ENCODE measurements at regions of chr16 and their contacts with region 1.

Region 1: GRCh38 chr16:21656795-21657768 is 4.7 kb upstream of the IGSF6 start:
- DNase-seq: peak; percentile 66
- ATAC-seq: no peak
- H3K4me3 Mint-ChIP-seq: no peak overlapping the region
- H3K27ac Mint-ChIP-seq: no peak overlapping the region
- H3K4me1 Mint-ChIP-seq: peaks cover 44% of the 10 kb centered on the region
- H3K27me3 Mint-ChIP-seq: no peaks in the 10 kb centered on the region

Region 2: GRCh38 chr16:21590287-21590686 is 66.8 kb before region 1 on chr16:
- CTCF ChIA-PET with region 1: interaction called, 13 read pairs
- POLR2A ChIA-PET with region 1: no interaction called
- DNase-seq: no peak
- ATAC-seq: no peak
- H3K4me3 Mint-ChIP-seq: no peak overlapping the region
- H3K27ac Mint-ChIP-seq: no peak overlapping the region
- H3K4me1 Mint-ChIP-seq: peaks cover 1% of the 10 kb centered on the region
- H3K27me3 Mint-ChIP-seq: peaks cover 3% of the 10 kb centered on the region

Region 3: DNA sequence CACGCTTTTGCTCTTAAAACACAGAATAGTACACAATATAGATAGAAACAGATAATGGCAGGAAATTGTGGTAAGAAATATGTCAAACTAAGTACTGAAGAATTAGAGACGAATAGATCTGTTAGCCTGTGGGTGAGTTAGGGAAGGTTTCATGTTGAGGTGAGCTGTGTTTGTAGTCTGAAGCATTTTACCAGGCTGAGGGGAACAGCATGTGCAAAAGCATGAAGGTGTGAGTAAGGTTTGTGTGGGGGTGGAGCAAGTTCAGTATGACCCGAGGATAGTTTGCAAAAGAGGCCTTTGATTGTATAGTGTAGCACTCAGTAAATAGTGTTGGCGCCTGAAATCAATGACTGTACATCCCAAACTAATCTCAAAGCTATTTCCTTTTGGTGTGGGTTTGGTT is 18.5 kb before region 1 on chr16:
- CTCF ChIA-PET with region 1: interaction called, 53 read pairs
- POLR2A ChIA-PET with region 1: no interaction called
- DNase-seq: peak; percentile 28
- ATAC-seq: peak; percentile 73
- H3K4me3 Mint-ChIP-seq: no peak overlapping the region
- H3K27ac Mint-ChIP-seq: peak overlapping the region; percentile 82
- H3K4me1 Mint-ChIP-seq: peaks cover 25% of the 10 kb centered on the region
- H3K27me3 Mint-ChIP-seq: no peaks in the 10 kb centered on the region

Region 4: GRCh38 chr16:21698169-21699032 is 41.3 kb after region 1 on chr16:
- CTCF ChIA-PET with region 1: interaction called, 105 read pairs
- POLR2A ChIA-PET with region 1: no interaction called
- DNase-seq: no peak
- ATAC-seq: no peak
- H3K4me3 Mint-ChIP-seq: no peak overlapping the region
- H3K27ac Mint-ChIP-seq: no peak overlapping the region
- H3K4me1 Mint-ChIP-seq: peaks cover 2% of the 10 kb centered on the region
- H3K27me3 Mint-ChIP-seq: peaks cover 6% of the 10 kb centered on the region

Measured in activated CD8-positive, alpha-beta T cell treated with anti-CD3 and anti-CD28 coated beads, Interleukin-2, amount 10 ng/mL, durations not matched to agents 7 days and 5 days (primary cell).